ENCODE measurements at regions of chr16 and their contacts with region 1.

Region 1: GRCh38 chr16:4365014-4365406 is 6.6 kb upstream of the VASN start:
- DNase-seq: no peak
- H3K4me3 ChIP-seq: no peak overlapping the region
- H3K27ac ChIP-seq: no peak overlapping the region
- H3K4me1 ChIP-seq: peaks cover 3 to 15% of the 10 kb centered on the region in 2 donors
- H3K27me3 ChIP-seq: no peaks in the 10 kb centered on the region
- CTCF ChIP-seq: no peak
- POLR2A ChIP-seq: no peak

Region 2: DNA sequence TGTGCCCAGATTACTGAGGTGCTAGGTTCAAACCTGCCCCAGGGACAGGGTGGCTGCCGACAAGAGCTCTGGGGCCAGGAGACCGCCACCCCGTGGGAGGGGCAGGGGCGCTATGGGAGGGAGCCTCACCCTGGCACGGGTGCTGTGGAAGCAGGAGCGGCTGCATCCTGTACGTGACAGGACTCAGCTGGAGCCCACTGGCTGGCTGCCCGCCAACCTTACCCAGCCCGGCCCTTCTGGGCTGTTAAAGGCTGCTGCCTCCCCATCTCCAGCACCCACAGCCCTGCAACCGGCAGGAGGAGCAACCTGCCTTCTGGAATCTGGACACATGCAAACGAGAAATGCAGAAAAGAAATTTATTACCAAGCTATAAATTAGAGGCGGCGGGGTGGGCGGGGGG is 25.1 kb before region 1 on chr16:
- intact Hi-C with region 1: loop called (anchors 2 kb)
- DNase-seq: no peak
- H3K4me3 ChIP-seq: no peak overlapping the region
- H3K27ac ChIP-seq: no peak overlapping the region
- H3K4me1 ChIP-seq: no peaks in the 10 kb centered on the region
- H3K27me3 ChIP-seq: no peaks in the 10 kb centered on the region
- CTCF ChIP-seq: no peak
- POLR2A ChIP-seq: no peak

Region 3: GRCh38 chr16:4391631-4392381 is 26.8 kb after region 1 on chr16:
- intact Hi-C with region 1: no loop called
- DNase-seq: no peak
- H3K4me3 ChIP-seq: peak overlapping the region in 1 of 3 donors; percentile 12
- H3K27ac ChIP-seq: peak overlapping the region; percentile 87 to 95
- H3K4me1 ChIP-seq: peaks cover 6 to 13% of the 10 kb centered on the region in 2 donors
- H3K27me3 ChIP-seq: no peaks in the 10 kb centered on the region
- CTCF ChIP-seq: no peak
- POLR2A ChIP-seq: no peak

Region 4: DNA sequence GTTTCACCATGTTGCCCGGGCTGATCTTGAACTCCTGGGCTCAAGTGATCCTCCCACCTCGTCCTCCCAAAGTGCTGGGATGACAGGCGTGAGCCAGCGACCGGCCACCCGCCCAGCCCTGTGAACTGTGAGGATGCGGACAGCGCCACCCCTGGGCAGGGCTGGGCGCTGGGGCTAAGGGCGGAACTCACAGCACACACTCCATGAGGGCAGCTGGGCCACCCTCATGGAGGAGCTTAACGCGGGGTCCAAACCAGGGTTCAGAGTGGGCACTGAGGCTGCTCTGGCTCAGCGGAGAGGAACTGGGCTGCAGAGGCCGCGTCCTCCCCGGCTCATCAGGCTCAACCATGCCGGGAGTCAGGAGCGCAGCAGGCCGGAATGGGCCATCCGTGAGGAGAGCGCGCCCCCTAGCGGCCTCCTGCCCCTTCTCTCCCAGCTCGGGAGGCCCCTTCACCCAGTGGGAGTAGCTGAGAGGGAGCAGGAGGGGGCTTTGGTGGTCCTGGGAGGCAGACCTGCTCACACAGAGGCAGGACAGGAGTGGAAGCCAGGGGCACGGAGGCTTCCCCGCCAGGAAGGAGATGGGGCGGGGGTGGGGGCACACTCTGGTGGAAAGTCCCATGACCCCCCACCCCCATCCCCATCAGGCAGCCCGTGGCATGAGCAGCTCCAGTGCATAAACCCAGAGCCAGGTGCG is 37.6 kb after region 1 on chr16:
- intact Hi-C with region 1: loop called (anchors 2 kb)
- DNase-seq: peak; percentile 74 to 91
- H3K4me3 ChIP-seq: peak overlapping the region in 2 of 3 donors; percentile 15 to 52
- H3K27ac ChIP-seq: no peak overlapping the region
- H3K4me1 ChIP-seq: peaks cover 0 to 3% of the 10 kb centered on the region in 2 donors
- H3K27me3 ChIP-seq: no peaks in the 10 kb centered on the region
- CTCF ChIP-seq: peak; percentile 85 to 97 (median 96)
- POLR2A ChIP-seq: no peak

Measured in breast epithelium (tissue), 4 donors.